ENCODE measurements at regions of chr5 and their contacts with region 1.

Region 1: DNA sequence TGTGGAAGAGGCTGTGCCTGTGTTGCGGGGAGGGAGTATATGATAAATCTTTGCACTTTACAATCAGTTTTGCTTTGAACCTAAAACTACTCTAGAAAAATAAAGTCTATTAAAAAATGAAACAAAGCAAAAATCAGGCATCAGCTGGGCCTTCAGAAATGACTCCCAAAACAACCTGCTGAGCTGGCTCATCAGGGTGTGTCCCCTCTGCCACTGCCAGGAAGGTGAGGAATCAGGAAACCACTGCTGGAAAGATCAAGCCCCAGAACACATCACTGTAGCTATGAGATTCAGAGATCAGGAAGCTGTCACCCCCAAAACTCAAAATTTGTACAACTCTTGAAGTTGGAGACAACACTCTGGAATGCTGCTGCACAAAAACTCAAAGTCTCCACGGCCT is 40.5 kb upstream of the TBCA start:
- DNase-seq: no peak
- ATAC-seq: no peak
- H3K4me3 ChIP-seq: no peak overlapping the region
- H3K27ac ChIP-seq: no peak overlapping the region
- H3K4me1 ChIP-seq: no peaks in the 10 kb centered on the region
- H3K27me3 ChIP-seq: peaks cover 30% of the 10 kb centered on the region
- CTCF ChIP-seq: no peak
- POLR2A ChIP-seq: no peak
- RAD21 ChIP-seq: no peak

Region 2: GRCh38 chr5:77960863-77961396 is 144.3 kb after region 1 on chr5:
- CTCF ChIA-PET with region 1: no interaction called
- POLR2A ChIA-PET with region 1: interaction called, 16 read pairs
- dilution Hi-C with region 1: no loop called
- in situ Hi-C with region 1: no loop called
- intact Hi-C with region 1: no loop called
- DNase-seq: no peak
- ATAC-seq: no peak
- H3K4me3 ChIP-seq: no peak overlapping the region
- H3K27ac ChIP-seq: no peak overlapping the region
- H3K4me1 ChIP-seq: no peaks in the 10 kb centered on the region
- H3K27me3 ChIP-seq: peaks cover 57% of the 10 kb centered on the region
- CTCF ChIP-seq: no peak
- POLR2A ChIP-seq: no peak
- RAD21 ChIP-seq: no peak

Measured in IMR-90 (cell line).